Thyroid gland (tissue), 4 donors: ENCODE measurements at regions of chr15 and their contacts with region 1.

Region 1: GRCh38 chr15:74382004-74382816 is 14.8 kb upstream of the CYP11A1 start:
- DNase-seq: peak; percentile 78 to 80
- H3K4me3 ChIP-seq: no peak overlapping the region
- H3K27ac ChIP-seq: no peak overlapping the region
- H3K4me1 ChIP-seq: peaks cover 0 to 3% of the 10 kb centered on the region in 2 donors
- H3K27me3 ChIP-seq: no peaks in the 10 kb centered on the region
- CTCF ChIP-seq: peak; percentile 57 to 84 (median 76)
- POLR2A ChIP-seq: no peak

Region 2: GRCh38 chr15:74438721-74439316 is 56.6 kb after region 1 on chr15:
- intact Hi-C with region 1: loop called (anchors 2 kb)
- DNase-seq: peak; percentile 71 to 76
- H3K4me3 ChIP-seq: no peak overlapping the region
- H3K27ac ChIP-seq: no peak overlapping the region
- H3K4me1 ChIP-seq: peaks cover 0 to 13% of the 10 kb centered on the region in 2 donors
- H3K27me3 ChIP-seq: no peaks in the 10 kb centered on the region
- CTCF ChIP-seq: peak; percentile 53 to 89 (median 76)
- POLR2A ChIP-seq: no peak

Region 3: DNA sequence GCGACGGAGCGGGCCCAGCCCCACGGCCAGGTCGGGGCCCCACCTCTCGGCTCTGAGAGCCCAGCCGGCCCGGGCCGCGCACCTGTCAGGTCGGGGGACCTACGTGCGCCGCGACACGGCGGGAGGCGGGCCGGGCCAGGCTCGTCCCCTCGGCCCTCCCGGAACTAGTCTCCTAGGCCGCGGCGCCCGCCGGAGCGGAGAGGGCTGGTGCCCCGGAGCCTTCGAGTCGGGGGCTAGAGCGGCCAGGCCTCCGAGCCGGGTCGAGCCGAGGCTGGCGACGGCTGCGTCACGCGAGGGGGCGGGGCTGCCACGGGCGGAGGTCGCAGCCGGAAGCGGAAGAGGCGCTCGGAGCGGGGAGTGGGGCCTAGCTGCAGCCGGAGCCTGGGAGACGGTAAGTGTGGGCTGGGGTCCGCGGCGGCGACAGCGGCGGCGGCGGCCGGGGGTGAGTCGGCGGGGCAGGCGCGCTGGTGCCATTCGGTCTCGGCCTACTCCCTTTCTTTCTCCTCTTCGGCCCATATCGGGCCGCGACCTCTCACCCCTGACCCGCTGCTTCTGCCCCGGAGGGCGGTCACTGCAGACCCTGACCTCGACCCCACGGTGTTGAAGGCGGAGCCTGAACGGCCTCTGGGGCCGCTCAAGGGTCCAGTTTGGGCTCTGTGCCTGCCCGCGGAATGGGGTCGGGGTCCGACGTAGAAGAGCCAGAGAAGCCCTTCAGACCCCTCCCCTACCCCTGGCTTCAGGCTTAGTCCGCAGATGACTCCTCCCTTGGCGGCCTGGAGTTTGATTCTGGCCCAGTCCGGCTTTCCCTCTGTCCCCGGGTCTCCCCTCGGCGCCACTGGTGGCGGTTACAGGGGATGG is 233.5 kb after region 1 on chr15 and contains the start of gene CLK3:
- intact Hi-C with region 1: loop called (anchors 10 kb)
- DNase-seq: peak; percentile 97
- H3K4me3 ChIP-seq: peak within 1 kb of the TSS; percentile 79 to 98 (median 98)
- H3K27ac ChIP-seq: peak within 1 kb of the TSS; percentile 88 to 98 (median 98)
- H3K4me1 ChIP-seq: peaks cover 17 to 19% of the 10 kb centered on the region in 2 donors
- H3K27me3 ChIP-seq: no peaks in the 10 kb centered on the region
- CTCF ChIP-seq: no peak
- POLR2A ChIP-seq: peak in 1 of 2 donors; percentile 85
- total RNA-seq, gene CLK3: 91.9 to 156 (median 120) TPM

Region 4: DNA sequence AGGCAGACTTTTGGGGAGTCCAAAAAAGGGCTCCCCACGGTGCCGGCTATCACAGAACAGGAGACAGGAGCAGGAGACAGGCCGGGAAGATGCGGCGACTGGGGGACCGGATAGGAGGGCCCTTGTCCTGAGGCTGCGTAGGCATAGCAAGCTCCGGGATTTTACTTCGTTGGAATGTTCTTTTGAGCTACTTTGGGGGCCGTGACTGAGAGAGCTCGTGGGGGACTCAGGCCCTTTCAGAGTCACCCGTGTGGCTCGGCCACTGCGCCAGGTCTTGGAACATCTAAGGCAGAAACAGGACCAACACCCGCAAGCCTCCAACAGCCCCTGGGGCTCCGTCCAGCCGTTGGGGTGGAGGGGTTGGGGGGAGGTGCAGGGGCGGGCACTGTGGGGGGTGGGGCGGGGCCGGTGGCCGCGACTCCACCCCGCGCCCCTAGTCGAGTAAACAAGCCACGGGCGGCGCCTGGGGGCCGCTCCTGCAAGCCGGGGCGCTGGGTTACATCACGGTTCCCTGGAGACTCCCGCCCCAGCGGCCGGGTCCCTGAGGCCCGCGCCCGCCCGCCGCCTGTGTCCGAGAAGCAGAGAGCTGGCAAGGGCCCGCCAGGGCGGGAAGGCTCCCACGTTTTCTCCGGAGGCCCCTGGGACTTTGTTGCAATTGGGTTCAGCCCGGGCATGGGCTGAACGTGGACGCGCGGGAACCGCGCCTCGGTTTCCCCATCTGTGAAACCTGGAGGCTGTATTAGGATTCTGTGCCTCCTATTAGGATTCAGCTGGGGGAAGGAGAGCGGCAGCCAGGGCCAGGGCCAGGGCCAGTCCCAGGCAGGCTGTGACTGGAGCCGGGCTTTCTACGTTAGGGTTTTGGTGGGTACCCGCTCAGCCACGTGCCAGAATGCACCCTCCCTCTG is 796.2 kb after region 1 on chr15:
- intact Hi-C with region 1: no loop called
- DNase-seq: peak; percentile 56 to 60
- H3K4me3 ChIP-seq: peak overlapping the region in 1 of 3 donors; percentile 2
- H3K27ac ChIP-seq: peak overlapping the region; percentile 29 to 36 (median 34)
- H3K4me1 ChIP-seq: peaks cover 45 to 58% of the 10 kb centered on the region in 2 donors
- H3K27me3 ChIP-seq: no peaks in the 10 kb centered on the region
- CTCF ChIP-seq: no peak
- POLR2A ChIP-seq: no peak